Right ventricle myocardium inferior (tissue), 1 donor: ENCODE measurements at regions of chr1 and their contacts with region 1.

Region 1: DNA sequence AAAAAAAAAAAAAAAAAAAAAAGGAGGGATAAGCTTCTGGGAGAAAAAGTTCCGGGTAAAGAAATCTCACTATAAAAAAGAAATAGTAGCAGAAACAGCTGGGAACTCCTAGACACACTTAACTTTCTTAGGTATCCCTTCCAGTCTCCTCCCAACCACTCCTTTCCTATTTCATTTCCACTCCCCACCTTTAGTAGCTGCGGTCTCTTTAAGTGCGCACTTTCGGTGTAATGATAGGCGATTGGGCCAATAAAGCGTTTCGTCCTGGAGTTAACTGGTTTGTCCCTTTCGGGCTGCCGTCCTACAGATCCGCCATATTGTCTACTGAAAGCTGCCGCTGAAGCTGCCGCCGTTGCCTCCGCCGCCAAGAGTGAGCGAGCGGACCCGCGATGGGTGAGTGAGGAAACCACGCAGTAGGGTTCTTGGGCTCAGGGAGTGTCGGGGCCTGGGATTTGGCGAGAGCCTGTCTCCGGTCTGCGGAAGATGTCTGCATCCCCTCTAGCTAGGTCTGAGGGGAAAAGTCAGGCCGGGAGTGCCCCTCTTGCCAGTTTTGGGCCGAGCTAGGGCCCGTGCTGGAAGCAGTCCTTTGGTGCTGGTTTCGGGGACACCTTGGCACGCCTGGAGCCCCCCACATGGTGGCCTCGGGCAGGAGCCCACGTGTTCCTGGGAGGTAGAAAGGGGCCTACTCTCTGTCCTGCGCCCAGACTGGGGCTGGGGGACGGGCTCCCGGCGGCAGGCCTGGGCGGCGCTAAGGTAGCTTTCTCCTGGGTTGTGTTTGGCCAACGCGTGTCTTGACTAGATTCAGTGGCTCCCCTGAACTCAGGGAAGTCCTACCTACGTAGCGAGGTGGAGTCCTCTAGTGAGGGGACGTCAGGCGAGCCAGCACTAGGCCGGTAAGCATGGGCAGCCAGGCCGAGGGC is at the start of gene KPNA6:
- DNase-seq: peak; percentile 91
- ATAC-seq: peak; percentile 92
- total RNA-seq, gene KPNA6: 70.3 TPM

Region 2: DNA sequence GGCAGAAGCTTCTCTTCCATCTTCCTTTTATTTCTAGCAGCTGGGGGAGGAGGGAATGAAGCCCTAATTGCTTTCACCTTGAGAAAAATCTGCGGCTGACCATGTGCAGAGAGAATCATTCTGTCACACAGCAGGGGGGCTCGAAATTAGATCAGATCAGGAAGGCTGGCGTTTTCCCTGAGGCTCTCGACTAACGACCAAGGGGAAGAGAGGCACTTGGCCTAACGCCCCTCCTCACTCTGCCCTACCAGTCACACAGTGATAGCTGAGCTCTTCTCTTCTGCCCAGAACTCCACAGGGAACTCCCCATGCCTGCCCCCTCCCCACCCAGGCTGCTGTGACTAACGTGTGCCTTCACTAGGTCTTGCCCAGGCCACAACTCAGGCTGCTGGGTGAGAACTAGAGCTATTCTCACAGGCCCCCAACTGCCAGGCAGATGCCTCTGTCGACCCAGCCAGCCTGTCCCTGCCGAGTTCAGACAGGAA is 120.8 kb before region 1 on chr1:
- intact Hi-C with region 1: no loop called
- DNase-seq: no peak
- ATAC-seq: no peak

Region 3: GRCh38 chr1:32179443-32180185 is 71.6 kb after region 1 on chr1 and contains the start of gene TXLNA:
- intact Hi-C with region 1: loop called (anchors 1 kb)
- DNase-seq: peak; percentile 99
- ATAC-seq: peak; percentile 96
- total RNA-seq, gene TXLNA: 17.4 TPM